IMR-90 (cell line): ENCODE measurements at regions of chr3 and their contacts with region 1.

Region 1: GRCh38 chr3:31960793-31961431 is 20.1 kb downstream of the OSBPL10 start:
- DNase-seq: peak; percentile 65
- ATAC-seq: peak; percentile 54
- H3K4me3 ChIP-seq: no peak overlapping the region
- H3K27ac ChIP-seq: peak overlapping the region; percentile 64; the same call in 1 of the 2 replicates
- H3K4me1 ChIP-seq: peaks cover 8% of the 10 kb centered on the region
- H3K27me3 ChIP-seq: no peaks in the 10 kb centered on the region
- CTCF ChIP-seq: no peak
- POLR2A ChIP-seq: no peak
- RAD21 ChIP-seq: no peak

Region 2: DNA sequence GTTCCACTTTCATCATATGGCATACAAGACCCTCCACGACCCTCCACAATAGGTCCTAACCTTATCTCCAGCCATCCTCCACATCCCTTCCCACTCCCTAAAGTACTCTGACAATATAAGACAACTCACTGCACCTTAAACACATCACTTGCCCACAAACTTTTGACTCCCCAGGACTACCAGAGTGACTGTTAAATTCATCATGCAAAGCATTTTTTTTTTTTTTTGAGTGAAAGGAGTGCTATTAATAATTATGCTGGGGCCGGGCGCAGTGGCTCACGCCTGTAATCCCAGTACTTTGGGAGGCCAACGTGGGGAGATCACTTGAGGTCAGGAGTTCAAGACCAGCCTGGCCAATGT is 35.7 kb before region 1 on chr3:
- CTCF ChIA-PET with region 1: no interaction called
- POLR2A ChIA-PET with region 1: no interaction called
- dilution Hi-C with region 1: no loop called
- in situ Hi-C with region 1: no loop called
- intact Hi-C with region 1: loop called (anchors 5 kb)
- DNase-seq: no peak
- ATAC-seq: no peak
- H3K4me3 ChIP-seq: no peak overlapping the region
- H3K27ac ChIP-seq: no peak overlapping the region
- H3K4me1 ChIP-seq: no peaks in the 10 kb centered on the region
- H3K27me3 ChIP-seq: no peaks in the 10 kb centered on the region
- CTCF ChIP-seq: no peak
- POLR2A ChIP-seq: no peak
- RAD21 ChIP-seq: no peak

Region 3: GRCh38 chr3:32484436-32484835 is 523.5 kb after region 1 on chr3:
- CTCF ChIA-PET with region 1: no interaction called
- POLR2A ChIA-PET with region 1: no interaction called
- dilution Hi-C with region 1: no loop called
- in situ Hi-C with region 1: no loop called
- intact Hi-C with region 1: no loop called
- DNase-seq: no peak
- ATAC-seq: no peak
- H3K4me3 ChIP-seq: no peak overlapping the region
- H3K27ac ChIP-seq: no peak overlapping the region
- H3K4me1 ChIP-seq: no peaks in the 10 kb centered on the region
- H3K27me3 ChIP-seq: no peaks in the 10 kb centered on the region
- CTCF ChIP-seq: no peak
- POLR2A ChIP-seq: no peak
- RAD21 ChIP-seq: no peak